HCT116 (cell line): ENCODE measurements at regions of chr9 and their contacts with region 1.

Region 1: GRCh38 chr9:86282077-86282978 is at the start of gene ISCA1:
- DNase-seq: peak; percentile 64
- ATAC-seq: peak; percentile 93
- H3K4me3 ChIP-seq: peak within 1 kb of the TSS; percentile 95 to 97
- H3K27ac ChIP-seq: peak within 1 kb of the TSS; percentile 97
- H3K4me1 ChIP-seq: peaks cover 5 to 15% of the 10 kb centered on the region in 2 experiments; a peak in 3 of 4 replicates
- H3K27me3 ChIP-seq: no peaks in the 10 kb centered on the region
- CTCF ChIP-seq: no peak
- POLR2A ChIP-seq: peak; percentile 60
- RAD21 ChIP-seq: no peak
- total RNA-seq, gene ISCA1: 25.7 TPM

Region 2: GRCh38 chr9:86349271-86349670 is 66.9 kb after region 1 on chr9:
- CTCF ChIA-PET with region 1: no interaction called
- POLR2A ChIA-PET with region 1: no interaction called
- RAD21 ChIA-PET with region 1: no interaction called
- intact Hi-C with region 1: loop called (anchors 2 kb)
- DNase-seq: no peak
- ATAC-seq: no peak
- H3K4me3 ChIP-seq: no peak overlapping the region
- H3K27ac ChIP-seq: no peak overlapping the region
- H3K4me1 ChIP-seq: peaks cover 12 to 29% of the 10 kb centered on the region in 2 experiments; a peak in 3 of 4 replicates
- H3K27me3 ChIP-seq: no peaks in the 10 kb centered on the region
- CTCF ChIP-seq: no peak
- POLR2A ChIP-seq: no peak
- RAD21 ChIP-seq: no peak